Right cardiac atrium (tissue), 5 donors: ENCODE measurements at regions of chr3 and their contacts with region 1.

Region 1: DNA sequence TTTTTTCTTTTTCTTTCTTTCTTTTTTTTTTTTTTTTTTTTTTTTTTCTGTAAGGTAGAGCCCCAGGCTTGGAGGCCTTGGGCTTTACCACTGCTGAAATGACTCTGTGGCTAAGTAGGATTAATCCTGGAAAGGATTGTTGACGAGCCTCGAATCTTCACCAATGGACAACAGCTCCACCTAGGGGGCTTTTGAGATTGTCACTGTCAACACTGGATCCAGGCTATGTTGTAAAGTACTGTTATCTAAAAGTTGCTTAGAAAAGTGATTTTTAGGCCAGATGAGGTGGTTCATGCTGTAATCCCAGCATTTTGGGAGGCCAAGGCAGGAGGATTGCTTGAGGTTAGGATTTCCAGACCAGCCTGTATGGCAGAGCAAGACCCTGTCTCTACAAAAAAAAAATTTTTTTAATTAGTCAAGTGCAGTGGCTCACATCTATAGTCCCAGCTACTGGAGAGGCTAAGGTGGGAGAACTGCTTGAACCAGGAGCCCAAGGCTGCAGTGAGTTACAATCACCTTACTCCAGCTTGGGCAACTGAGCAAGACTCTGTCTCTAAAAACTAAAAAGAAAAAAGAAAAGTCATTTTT is 41.6 kb downstream of the KLHL18 start:
- DNase-seq: peak in 2 of 3 donors; percentile 29 to 49
- ATAC-seq: peak; percentile 87 to 90
- H3K4me3 ChIP-seq: no peak overlapping the region
- H3K27ac ChIP-seq: no peak overlapping the region
- H3K4me1 ChIP-seq: peaks cover 3% of the 10 kb centered on the region
- H3K27me3 ChIP-seq: no peaks in the 10 kb centered on the region

Region 2: GRCh38 chr3:47250309-47251060 is 73.9 kb before region 1 on chr3:
- intact Hi-C with region 1: loop called in 2 of 4 experiments (anchors 5 to 10 kb)
- DNase-seq: peak; percentile 26 to 67 (median 60)
- ATAC-seq: peak; percentile 62 to 64
- H3K4me3 ChIP-seq: no peak overlapping the region
- H3K27ac ChIP-seq: no peak overlapping the region
- H3K4me1 ChIP-seq: no peaks in the 10 kb centered on the region
- H3K27me3 ChIP-seq: no peaks in the 10 kb centered on the region

Region 3: GRCh38 chr3:47288966-47289910 is 35.1 kb before region 1 on chr3:
- intact Hi-C with region 1: loop called in 1 of 4 experiments (anchors 5 kb)
- DNase-seq: no peak
- ATAC-seq: no peak
- H3K4me3 ChIP-seq: no peak overlapping the region
- H3K27ac ChIP-seq: no peak overlapping the region
- H3K4me1 ChIP-seq: no peaks in the 10 kb centered on the region
- H3K27me3 ChIP-seq: no peaks in the 10 kb centered on the region

Region 4: DNA sequence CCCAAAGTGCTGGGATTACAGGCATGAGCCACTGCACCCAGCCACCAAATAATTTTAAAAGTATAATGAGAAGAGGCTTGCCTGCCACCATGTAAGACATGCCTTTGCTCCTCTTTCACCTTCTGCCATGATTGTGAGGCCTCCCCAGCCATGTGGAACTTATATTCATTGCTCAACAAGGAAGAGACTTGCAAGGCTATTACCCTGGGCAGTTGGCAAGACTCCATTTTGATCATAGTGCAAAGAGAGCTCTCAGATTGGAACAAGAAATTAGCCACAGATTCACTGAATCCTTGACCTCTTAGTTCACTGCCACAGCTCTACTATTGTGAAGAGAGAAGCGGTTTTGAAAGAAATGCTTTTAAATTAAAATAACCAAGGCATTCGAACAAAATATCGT is 145.2 kb after region 1 on chr3:
- intact Hi-C with region 1: no loop called
- DNase-seq: no peak
- ATAC-seq: no peak
- H3K4me3 ChIP-seq: no peak overlapping the region
- H3K27ac ChIP-seq: no peak overlapping the region
- H3K4me1 ChIP-seq: no peaks in the 10 kb centered on the region
- H3K27me3 ChIP-seq: no peaks in the 10 kb centered on the region